H1 (cell line): ENCODE measurements at regions of chr14 and their contacts with region 1.

Region 1: GRCh38 chr14:89805501-89805900 is 149.0 kb downstream of the EFCAB11 start:
- DNase-seq: no peak
- H3K4me3 ChIP-seq: no peak overlapping the region
- H3K27ac ChIP-seq: no peak overlapping the region
- H3K4me1 ChIP-seq: no peaks in the 10 kb centered on the region
- H3K27me3 ChIP-seq: no peaks in the 10 kb centered on the region
- CTCF ChIP-seq: no peak
- EP300 ChIP-seq: no peak
- POLR2A ChIP-seq: no peak
- RAD21 ChIP-seq: no peak

Region 2: DNA sequence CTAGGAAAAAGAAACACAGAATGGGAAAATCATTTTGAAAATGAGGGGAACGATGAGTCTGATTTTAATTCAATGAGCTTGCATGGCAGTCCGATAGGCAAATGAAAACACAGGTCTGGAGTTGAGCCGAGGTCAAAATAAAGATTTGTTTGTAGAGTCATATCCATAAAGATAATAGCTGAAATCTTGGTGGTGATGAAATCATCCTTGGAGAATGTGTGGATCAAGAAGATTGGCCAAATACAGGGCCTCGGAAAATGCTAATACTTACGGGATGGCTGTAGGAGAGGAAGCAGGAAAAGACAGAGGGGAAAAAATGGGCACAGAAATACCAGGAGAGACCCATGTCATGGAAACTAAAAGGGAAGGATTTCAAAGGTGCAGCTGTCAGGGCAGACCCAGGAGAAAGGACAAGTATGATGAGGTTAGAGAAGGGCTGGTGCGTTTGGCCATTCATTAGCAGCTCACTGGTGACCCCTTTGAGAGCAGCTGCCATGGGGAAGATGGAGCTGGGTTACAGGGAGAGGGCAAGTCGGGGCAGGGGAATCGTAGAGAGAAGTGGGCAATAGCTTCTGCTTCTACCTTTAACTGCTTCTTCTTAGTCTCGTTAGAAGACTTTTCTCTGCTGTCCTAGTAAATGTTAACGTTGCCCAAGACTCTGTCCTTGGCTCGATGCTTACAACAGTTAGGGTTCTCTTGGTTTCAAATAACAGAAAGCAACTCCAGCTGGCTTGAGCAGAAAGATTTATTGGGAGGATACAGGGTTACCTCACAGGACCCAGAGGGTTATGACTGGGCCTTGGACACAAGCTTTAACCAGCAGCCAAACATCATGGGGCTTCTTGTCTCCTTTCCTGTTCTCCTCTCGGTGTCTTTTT is 12.8 kb before region 1 on chr14:
- CTCF ChIA-PET with region 1: interaction called, 10 read pairs
- POLR2A ChIA-PET with region 1: interaction called, 3 read pairs
- DNase-seq: no peak
- H3K4me3 ChIP-seq: no peak overlapping the region
- H3K27ac ChIP-seq: no peak overlapping the region
- H3K4me1 ChIP-seq: no peaks in the 10 kb centered on the region
- H3K27me3 ChIP-seq: no peaks in the 10 kb centered on the region
- CTCF ChIP-seq: no peak
- EP300 ChIP-seq: no peak
- POLR2A ChIP-seq: no peak
- RAD21 ChIP-seq: no peak